Activated CD4-positive, alpha-beta memory T cell treated with anti-CD3 and anti-CD28 coated beads, Interleukin-2, amount 10 ng/mL, durations not matched to agents 7 days and 5 days (primary cell): ENCODE measurements at regions of chr6 and their contacts with region 1.

Region 1: DNA sequence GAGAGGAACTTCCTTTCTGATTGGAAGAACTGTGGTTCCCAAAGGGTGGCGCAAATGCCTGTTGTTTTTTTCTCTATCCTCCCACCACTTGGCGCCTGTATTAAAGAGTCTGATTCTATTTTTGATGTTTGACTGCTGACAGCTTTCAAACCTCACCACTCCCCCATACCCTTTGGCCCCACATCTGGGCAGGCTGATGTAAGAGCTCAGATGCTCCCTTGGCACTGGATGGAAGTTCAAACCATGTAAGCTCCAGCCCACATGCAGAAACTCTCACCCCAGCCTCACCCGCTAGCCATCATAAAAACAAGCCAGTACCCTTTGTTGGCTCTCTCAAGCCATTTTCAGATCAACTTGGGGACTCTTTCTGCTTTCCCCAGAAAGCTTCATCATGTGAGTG is 20.0 kb upstream of the TMEM14A start:
- DNase-seq: no peak
- H3K4me3 Mint-ChIP-seq: no peak overlapping the region
- H3K27ac Mint-ChIP-seq: no peak overlapping the region
- H3K4me1 Mint-ChIP-seq: peaks cover 5% of the 10 kb centered on the region
- H3K27me3 Mint-ChIP-seq: peaks cover 33% of the 10 kb centered on the region

Region 2: GRCh38 chr6:52419809-52420670 is 230.9 kb before region 1 on chr6 and contains the start of gene EFHC1:
- CTCF ChIA-PET with region 1: interaction called, 17 read pairs
- POLR2A ChIA-PET with region 1: no interaction called
- DNase-seq: peak; percentile 98
- H3K4me3 Mint-ChIP-seq: no peak within 1 kb of the TSS
- H3K27ac Mint-ChIP-seq: peak within 1 kb of the TSS; percentile 33
- H3K4me1 Mint-ChIP-seq: peaks cover 20% of the 10 kb centered on the region
- H3K27me3 Mint-ChIP-seq: peaks cover 6% of the 10 kb centered on the region
- total RNA-seq, gene EFHC1: 1.6 to 3.4 TPM

Region 3: DNA sequence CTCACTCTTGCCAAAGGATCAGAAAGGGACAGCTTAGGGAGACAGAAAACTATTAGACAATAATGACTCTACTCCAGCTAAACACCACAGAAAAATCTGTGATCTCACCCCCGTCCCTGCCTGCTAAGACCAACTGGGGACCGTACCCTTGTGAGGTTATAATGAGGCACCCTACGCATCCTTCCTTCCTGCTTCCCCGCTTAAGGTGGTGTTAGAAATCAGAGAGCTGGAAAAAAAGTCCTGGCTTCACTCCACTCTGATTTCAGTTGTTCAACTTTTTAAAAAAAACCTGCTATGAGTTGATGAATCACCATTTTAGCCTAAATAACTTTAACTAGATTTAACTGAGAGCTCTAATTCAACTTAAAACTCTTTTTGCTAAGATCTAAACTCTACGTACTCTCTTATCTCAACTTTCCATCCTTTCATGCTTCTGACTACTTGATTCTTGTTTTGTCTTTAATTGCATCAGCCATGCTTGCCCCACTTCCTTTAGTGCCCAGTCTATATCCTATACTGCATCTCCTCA is 15.8 kb before region 1 on chr6:
- CTCF ChIA-PET with region 1: interaction called, 38 read pairs
- POLR2A ChIA-PET with region 1: no interaction called
- DNase-seq: peak; percentile 20
- H3K4me3 Mint-ChIP-seq: no peak overlapping the region
- H3K27ac Mint-ChIP-seq: peak overlapping the region; percentile 29
- H3K4me1 Mint-ChIP-seq: peaks cover 17% of the 10 kb centered on the region
- H3K27me3 Mint-ChIP-seq: peaks cover 2% of the 10 kb centered on the region

Region 4: DNA sequence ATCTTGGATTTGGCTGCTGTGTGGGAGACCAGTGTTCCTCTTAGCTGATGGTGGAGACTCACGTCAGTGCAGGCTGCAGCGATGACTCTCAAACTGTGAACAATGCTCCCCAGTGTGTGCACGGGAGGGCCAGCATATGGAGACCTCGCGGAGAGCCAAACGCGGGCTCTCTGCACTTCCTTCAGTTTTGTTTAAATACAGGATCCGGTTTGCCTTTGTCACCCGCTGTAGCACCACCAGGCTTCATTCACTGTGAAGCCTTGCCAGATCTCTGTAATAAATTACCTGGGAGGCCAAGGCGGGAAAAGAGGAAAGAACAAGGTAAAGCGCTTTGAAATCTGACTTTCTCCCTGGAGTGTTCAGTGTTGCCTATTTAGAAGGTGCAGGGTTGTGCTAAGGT is 10.8 kb before region 1 on chr6:
- CTCF ChIA-PET with region 1: interaction called, 38 read pairs
- POLR2A ChIA-PET with region 1: interaction called, 3 read pairs
- DNase-seq: no peak
- H3K4me3 Mint-ChIP-seq: no peak overlapping the region
- H3K27ac Mint-ChIP-seq: no peak overlapping the region
- H3K4me1 Mint-ChIP-seq: peaks cover 17% of the 10 kb centered on the region
- H3K27me3 Mint-ChIP-seq: peaks cover 19% of the 10 kb centered on the region

Region 5: GRCh38 chr6:52664186-52664990 is 13.4 kb after region 1 on chr6:
- CTCF ChIA-PET with region 1: interaction called, 42 read pairs
- POLR2A ChIA-PET with region 1: no interaction called
- DNase-seq: peak; percentile 81
- H3K4me3 Mint-ChIP-seq: no peak overlapping the region
- H3K27ac Mint-ChIP-seq: no peak overlapping the region
- H3K4me1 Mint-ChIP-seq: peaks cover 17% of the 10 kb centered on the region
- H3K27me3 Mint-ChIP-seq: no peaks in the 10 kb centered on the region